SK-N-SH (cell line): ENCODE measurements at regions of chr7 and their contacts with region 1.

Region 1: GRCh38 chr7:116258734-116259133 is 48.4 kb downstream of the TES start:
- DNase-seq: peak; percentile 32
- H3K4me3 ChIP-seq: peak overlapping the region in 1 of 2 experiments; percentile 4; a peak in 1 of 4 replicates
- H3K27ac ChIP-seq: peak overlapping the region; percentile 31 to 43; a peak in 3 of 4 replicates
- H3K4me1 ChIP-seq: peaks cover 0 to 12% of the 10 kb centered on the region in 2 experiments; a peak in 2 of 4 replicates
- H3K27me3 ChIP-seq: no peaks in the 10 kb centered on the region
- CTCF ChIP-seq: peak; percentile 99
- EP300 ChIP-seq: no peak
- RAD21 ChIP-seq: peak; percentile 87

Region 2: GRCh38 chr7:116242178-116242577 is 16.6 kb before region 1 on chr7:
- CTCF ChIA-PET with region 1: interaction called, 129 read pairs
- POLR2A ChIA-PET with region 1: interaction called, 3 read pairs
- DNase-seq: no peak
- H3K4me3 ChIP-seq: no peak overlapping the region
- H3K27ac ChIP-seq: no peak overlapping the region
- H3K4me1 ChIP-seq: peaks cover 7 to 9% of the 10 kb centered on the region in 2 experiments; a peak in 3 of 4 replicates
- H3K27me3 ChIP-seq: no peaks in the 10 kb centered on the region
- CTCF ChIP-seq: peak; percentile 60
- EP300 ChIP-seq: no peak
- RAD21 ChIP-seq: peak; percentile 32

Region 3: DNA sequence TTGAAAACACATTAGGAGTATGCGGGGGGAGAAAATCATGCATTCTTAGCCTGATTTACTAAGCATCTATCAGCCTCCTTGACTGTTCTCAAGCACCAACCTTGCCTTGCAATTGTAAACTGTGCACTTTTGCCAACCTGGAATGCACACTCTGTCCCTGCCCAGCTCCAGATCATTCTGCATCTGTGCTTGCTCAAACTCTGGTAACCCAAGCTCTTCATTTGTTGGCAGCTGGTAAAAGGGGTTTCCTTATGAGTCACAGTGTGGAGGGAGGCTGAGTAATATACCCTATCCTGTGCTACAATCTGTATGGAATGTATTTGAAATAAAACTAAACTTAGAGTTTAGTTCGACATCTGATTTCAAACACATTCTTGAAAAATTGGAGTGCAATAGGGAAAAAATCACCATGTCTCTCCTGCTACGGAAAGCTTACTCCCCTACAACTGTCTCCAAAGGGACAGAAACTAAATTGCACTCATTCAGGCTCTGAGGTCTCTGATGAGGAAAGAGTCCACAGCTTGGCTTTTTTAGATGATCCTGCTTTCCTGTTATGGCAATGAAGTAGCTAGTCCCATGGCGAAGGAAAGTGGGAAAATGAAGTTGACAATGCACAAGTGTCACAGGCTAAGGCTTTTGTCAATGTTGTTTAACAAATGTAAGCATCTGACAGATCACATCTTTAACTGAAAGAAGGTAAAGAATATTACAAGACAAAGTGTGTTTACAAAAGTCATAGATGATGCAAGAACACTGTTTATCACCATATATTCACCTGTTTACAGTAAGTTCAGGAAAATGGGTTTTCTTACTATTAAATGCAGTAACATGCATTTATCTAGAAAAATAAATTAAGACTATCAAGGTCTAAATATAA is 13.5 kb after region 1 on chr7:
- CTCF ChIA-PET with region 1: interaction called, 24 read pairs
- POLR2A ChIA-PET with region 1: interaction called, 4 read pairs
- DNase-seq: peak; percentile 7
- H3K4me3 ChIP-seq: peak overlapping the region; percentile 34 to 49; a peak in 3 of 4 replicates
- H3K27ac ChIP-seq: peak overlapping the region; percentile 91 to 96
- H3K4me1 ChIP-seq: peaks cover 0 to 33% of the 10 kb centered on the region in 2 experiments; a peak in 2 of 4 replicates
- H3K27me3 ChIP-seq: no peaks in the 10 kb centered on the region
- CTCF ChIP-seq: no peak
- EP300 ChIP-seq: peak; percentile 78 to 99
- RAD21 ChIP-seq: no peak

Region 4: GRCh38 chr7:116525913-116526861 is 267.5 kb after region 1 on chr7:
- CTCF ChIA-PET with region 1: interaction called, 18 read pairs
- POLR2A ChIA-PET with region 1: no interaction called
- DNase-seq: peak; percentile 90
- H3K4me3 ChIP-seq: peak overlapping the region; percentile 57 to 84
- H3K27ac ChIP-seq: peak overlapping the region; percentile 91 to 99
- H3K4me1 ChIP-seq: peaks cover 4 to 48% of the 10 kb centered on the region in 2 experiments
- H3K27me3 ChIP-seq: no peaks in the 10 kb centered on the region
- CTCF ChIP-seq: peak; percentile 95
- EP300 ChIP-seq: no peak; a peak in 1 of 4 replicates
- RAD21 ChIP-seq: peak; percentile 48; the same call in 1 of the 2 replicates